ENCODE measurements at regions of chr19 and their contacts with region 1.

Region 1: DNA sequence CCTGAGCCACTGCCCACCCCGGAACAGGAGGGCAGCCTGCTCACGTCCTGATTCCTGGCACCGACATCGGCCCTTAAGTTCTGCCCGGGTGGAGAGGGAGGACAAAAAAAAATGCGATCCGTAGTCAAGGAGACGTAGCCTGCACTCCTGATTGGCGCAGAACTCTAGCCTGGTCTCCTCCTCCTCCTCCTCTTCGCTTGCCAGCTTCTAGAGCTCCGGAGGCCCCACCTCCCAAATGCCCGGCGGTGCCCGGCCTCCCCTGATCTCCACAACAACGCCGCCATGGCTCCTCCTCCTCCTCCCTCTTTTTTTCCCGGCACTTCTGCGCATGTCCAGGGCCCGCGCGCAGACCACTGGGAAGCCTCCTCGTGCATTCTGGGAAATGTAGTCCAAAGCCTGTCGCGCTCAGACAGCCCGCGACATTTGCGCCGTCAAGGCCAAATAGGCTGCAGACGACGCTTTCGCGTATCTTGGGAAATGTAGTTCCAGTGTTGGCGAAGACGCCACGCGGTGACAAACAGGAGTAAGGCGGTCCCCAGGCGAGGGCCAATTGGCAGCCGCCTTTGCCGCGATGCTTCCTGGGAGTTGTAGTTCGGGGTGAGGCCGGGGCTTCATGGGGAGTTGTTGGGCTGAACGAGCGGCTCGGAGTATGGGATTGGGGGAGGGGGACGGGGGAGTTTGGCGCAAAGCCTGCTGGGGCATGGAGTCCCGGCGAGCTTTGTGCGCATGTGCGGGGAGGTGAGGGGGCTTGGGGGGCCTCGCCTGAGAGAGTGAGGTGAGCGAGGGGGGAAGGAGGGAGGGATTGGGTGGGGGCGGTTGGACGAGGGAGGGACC is at the start of gene ZNF444:
- DNase-seq: peak; percentile 98 to 100
- H3K4me3 ChIP-seq: peak within 1 kb of the TSS; percentile 60
- H3K27ac ChIP-seq: peak within 1 kb of the TSS; percentile 61
- H3K4me1 ChIP-seq: peaks cover 36% of the 10 kb centered on the region
- H3K27me3 ChIP-seq: no peaks in the 10 kb centered on the region
- CTCF ChIP-seq: no peak
- total RNA-seq, gene ZNF444: 50.5 and 74.2 TPM in 2 replicates

Region 2: GRCh38 chr19:56090931-56091490 is 49.8 kb before region 1 on chr19:
- CTCF ChIA-PET with region 1: no interaction called
- POLR2A ChIA-PET with region 1: no interaction called
- intact Hi-C with region 1: loop called (anchors 1 kb)
- DNase-seq: peak; percentile 83 to 99
- H3K4me3 ChIP-seq: peak overlapping the region; percentile 64
- H3K27ac ChIP-seq: peak overlapping the region; percentile 100
- H3K4me1 ChIP-seq: peaks cover 39% of the 10 kb centered on the region
- H3K27me3 ChIP-seq: no peaks in the 10 kb centered on the region
- CTCF ChIP-seq: no peak

Region 3: GRCh38 chr19:56110515-56111448 is 30.0 kb before region 1 on chr19:
- CTCF ChIA-PET with region 1: no interaction called
- POLR2A ChIA-PET with region 1: no interaction called
- intact Hi-C with region 1: no loop called
- DNase-seq: peak; percentile 71 to 78
- H3K4me3 ChIP-seq: no peak overlapping the region
- H3K27ac ChIP-seq: peak overlapping the region; percentile 69
- H3K4me1 ChIP-seq: peaks cover 24% of the 10 kb centered on the region
- H3K27me3 ChIP-seq: no peaks in the 10 kb centered on the region
- CTCF ChIP-seq: no peak

Region 4: DNA sequence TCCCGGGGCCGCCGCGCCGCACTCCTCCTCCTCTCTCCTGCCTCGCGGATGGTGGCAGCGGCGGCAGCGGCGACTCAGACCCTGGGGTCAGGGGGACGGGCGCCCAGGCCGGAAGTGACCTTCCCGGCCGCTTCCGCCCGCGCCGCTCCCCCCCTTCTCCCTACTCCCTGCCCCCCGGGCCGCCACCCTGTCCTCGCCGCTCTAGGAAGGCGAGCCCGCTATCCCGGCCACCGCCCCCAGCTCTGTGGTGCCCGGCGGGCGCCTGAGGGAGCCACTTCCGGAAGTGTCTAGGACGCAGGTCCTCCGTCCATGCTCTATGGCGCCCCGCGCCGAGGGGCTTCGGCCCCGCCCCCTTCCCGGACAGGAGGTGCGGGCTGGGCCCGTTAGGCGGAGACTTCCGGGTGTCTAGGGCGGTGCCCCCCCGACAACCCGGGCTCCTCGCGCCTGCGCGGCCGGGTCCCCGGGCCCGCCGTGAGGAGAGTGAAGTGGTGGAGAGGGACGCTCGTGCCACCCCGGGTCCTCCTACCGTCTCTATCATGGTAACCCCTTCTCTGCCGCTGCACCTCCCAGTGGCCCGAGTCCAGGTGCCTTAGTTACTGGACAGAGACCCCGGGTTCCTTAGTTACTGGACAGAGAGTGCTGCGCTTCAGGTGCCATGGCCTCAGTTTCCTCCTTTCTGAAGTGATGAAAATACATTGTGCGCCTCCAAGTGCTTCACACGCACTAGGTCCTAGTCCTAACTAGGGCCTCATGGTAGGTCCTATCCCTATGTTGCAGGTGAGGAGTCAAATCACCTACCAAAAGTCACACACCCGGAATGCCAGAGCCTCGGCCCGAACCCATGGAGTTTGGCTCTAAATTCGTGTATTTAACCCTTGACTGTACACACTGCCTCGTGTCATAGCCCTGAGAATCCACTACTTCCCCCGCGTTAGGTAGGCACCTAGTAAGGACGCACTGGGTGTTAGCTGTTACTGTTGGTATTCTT is 19.3 kb before region 1 on chr19 and contains the start of gene ZNF787:
- CTCF ChIA-PET with region 1: no interaction called
- POLR2A ChIA-PET with region 1: interaction called, 6 read pairs
- intact Hi-C with region 1: loop called (anchors 1 kb)
- DNase-seq: peak; percentile 93 to 100
- H3K4me3 ChIP-seq: peak within 1 kb of the TSS; percentile 94
- H3K27ac ChIP-seq: peak within 1 kb of the TSS; percentile 81
- H3K4me1 ChIP-seq: peaks cover 10% of the 10 kb centered on the region
- H3K27me3 ChIP-seq: no peaks in the 10 kb centered on the region
- CTCF ChIP-seq: no peak
- total RNA-seq, gene ZNF787: 51.4 and 51.5 TPM in 2 replicates

Region 5: GRCh38 chr19:56170261-56170660 is 29.5 kb after region 1 on chr19:
- CTCF ChIA-PET with region 1: interaction called, 6 read pairs
- POLR2A ChIA-PET with region 1: no interaction called
- intact Hi-C with region 1: loop called (anchors 2 kb)
- DNase-seq: peak; percentile 67 to 80
- H3K4me3 ChIP-seq: no peak overlapping the region
- H3K27ac ChIP-seq: no peak overlapping the region
- H3K4me1 ChIP-seq: peaks cover 5% of the 10 kb centered on the region
- H3K27me3 ChIP-seq: peaks cover 21% of the 10 kb centered on the region
- CTCF ChIP-seq: no peak

Measured in PC-9 (cell line).